ENCODE measurements at regions of chr19 and their contacts with region 1.

Region 1: DNA sequence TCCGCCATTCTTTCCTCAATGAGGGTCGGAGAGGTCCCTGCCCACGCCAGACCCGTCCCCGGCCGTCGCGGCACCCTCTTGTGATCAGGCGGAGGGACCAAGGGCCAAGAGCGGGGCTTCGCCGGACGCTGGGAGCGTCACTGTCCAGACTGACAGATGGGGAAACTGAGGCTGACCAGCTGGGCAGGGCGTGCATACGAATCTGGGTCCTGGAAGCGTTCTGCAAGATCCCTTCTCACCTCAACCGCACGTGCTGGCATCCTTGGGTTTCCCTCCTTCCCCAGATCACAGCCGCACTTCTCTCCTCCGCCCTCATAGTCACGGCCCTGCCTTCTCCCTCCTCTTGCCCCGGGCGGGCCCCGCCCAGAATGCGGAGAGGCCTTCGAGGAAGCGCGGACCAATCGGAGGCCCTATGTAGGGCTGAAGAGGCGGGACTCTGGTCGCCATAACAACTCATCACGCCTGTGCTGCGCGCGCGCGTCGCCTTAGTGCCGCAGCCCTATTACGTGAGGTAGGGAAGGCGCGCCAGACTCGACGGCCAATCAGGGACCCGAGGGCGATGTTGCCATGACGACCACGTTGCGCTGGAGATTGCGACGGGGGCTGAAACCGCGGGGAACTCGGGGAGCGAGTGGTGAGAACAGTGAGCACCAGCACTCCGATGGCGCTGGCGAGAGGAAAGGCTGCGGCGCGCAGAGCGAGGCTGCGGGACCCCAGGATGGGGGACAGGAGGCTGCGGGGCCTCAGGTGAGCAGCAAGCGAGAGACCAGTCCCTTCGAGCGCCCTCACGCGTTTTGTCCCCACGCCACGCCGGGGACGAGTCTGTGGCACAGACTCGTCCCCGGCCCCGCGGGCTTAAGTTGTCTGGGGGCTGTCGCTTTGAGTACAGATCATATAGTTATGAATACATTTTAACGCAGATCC is 5.7 kb downstream of the RNF225 start:
- DNase-seq: peak; percentile 99
- H3K4me3 Mint-ChIP-seq: peak overlapping the region; percentile 86
- H3K27ac Mint-ChIP-seq: peak overlapping the region; percentile 88
- H3K4me1 Mint-ChIP-seq: peaks cover 24% of the 10 kb centered on the region
- H3K27me3 Mint-ChIP-seq: peaks cover 5% of the 10 kb centered on the region

Region 2: GRCh38 chr19:57819475-57820148 is 581.6 kb before region 1 on chr19:
- intact Hi-C with region 1: loop called (anchors 1 kb)
- DNase-seq: peak; percentile 76
- H3K4me3 Mint-ChIP-seq: peak overlapping the region; percentile 99
- H3K27ac Mint-ChIP-seq: peak overlapping the region; percentile 98
- H3K4me1 Mint-ChIP-seq: peaks cover 50% of the 10 kb centered on the region
- H3K27me3 Mint-ChIP-seq: no peaks in the 10 kb centered on the region

Region 3: GRCh38 chr19:58212336-58213074 is 188.7 kb before region 1 on chr19:
- intact Hi-C with region 1: no loop called
- DNase-seq: no peak
- H3K4me3 Mint-ChIP-seq: no peak overlapping the region
- H3K27ac Mint-ChIP-seq: no peak overlapping the region
- H3K4me1 Mint-ChIP-seq: no peaks in the 10 kb centered on the region
- H3K27me3 Mint-ChIP-seq: no peaks in the 10 kb centered on the region

Region 4: DNA sequence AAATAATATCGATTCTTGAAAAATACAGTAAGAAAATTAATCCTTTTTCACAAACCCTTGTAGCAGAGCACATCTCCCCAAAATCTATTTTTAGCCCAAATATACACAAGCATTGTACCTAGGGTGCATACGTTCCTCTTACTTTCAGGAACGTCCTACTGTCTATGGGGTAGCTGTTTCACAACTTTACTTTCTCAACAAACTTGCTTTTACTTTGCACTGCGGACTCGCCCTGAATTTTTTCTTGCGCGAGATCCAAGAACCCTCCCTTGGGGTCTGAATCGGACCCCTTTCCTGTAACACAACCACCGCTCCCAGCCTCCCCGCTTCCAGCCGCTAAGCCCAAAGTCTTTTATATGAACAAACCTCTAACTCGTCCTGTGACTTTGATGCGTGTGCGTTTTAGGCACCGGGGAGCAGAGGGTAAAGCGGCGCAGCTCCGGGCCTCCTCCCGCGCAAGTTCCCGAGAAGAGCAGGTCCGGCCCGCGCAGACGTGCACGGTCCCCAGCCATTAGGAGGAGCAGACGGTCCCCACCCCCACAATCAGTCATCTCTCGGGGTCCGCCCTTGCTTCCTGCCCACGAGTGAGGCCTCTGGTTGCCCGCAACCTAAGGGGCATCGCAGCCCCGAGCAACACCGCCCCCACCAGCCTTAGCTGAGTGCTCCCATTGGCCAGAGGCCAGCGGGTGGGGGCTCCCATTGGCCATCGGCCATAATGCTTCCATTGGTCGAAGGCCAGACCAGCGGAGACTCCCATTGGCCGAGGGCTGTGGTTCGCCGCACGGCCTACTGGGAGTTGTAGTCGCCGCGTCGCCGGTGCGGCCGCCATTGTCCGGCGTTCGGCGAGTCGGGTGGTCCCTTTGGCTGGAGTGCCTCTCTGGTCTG is 122.8 kb before region 1 on chr19 and contains the start of gene ZNF8:
- intact Hi-C with region 1: loop called (anchors 1 kb)
- DNase-seq: peak; percentile 97
- H3K4me3 Mint-ChIP-seq: peak within 1 kb of the TSS; percentile 92
- H3K27ac Mint-ChIP-seq: peak within 1 kb of the TSS; percentile 93
- H3K4me1 Mint-ChIP-seq: peaks cover 23% of the 10 kb centered on the region
- H3K27me3 Mint-ChIP-seq: no peaks in the 10 kb centered on the region
- total RNA-seq, gene ZNF8: 4.0 and 4.4 TPM in 2 replicates

Region 5: GRCh38 chr19:58362272-58362994 is 38.7 kb before region 1 on chr19 and contains the start of gene ZNF497:
- intact Hi-C with region 1: loop called (anchors 1 kb)
- DNase-seq: peak; percentile 95
- H3K4me3 Mint-ChIP-seq: peak within 1 kb of the TSS; percentile 94
- H3K27ac Mint-ChIP-seq: peak within 1 kb of the TSS; percentile 95
- H3K4me1 Mint-ChIP-seq: peaks cover 7% of the 10 kb centered on the region
- H3K27me3 Mint-ChIP-seq: no peaks in the 10 kb centered on the region
- total RNA-seq, gene ZNF497: 0.76 and 0.93 TPM in 2 replicates

Region 6: GRCh38 chr19:58439576-58440554 is 38.7 kb after region 1 on chr19 and contains the start of gene ZNF132:
- intact Hi-C with region 1: loop called (anchors 1 kb)
- DNase-seq: peak; percentile 94
- H3K4me3 Mint-ChIP-seq: peak within 1 kb of the TSS; percentile 97
- H3K27ac Mint-ChIP-seq: peak within 1 kb of the TSS; percentile 98
- H3K4me1 Mint-ChIP-seq: peaks cover 24% of the 10 kb centered on the region
- H3K27me3 Mint-ChIP-seq: no peaks in the 10 kb centered on the region
- total RNA-seq, gene ZNF132: 3.4 and 3.5 TPM in 2 replicates

Region 7: DNA sequence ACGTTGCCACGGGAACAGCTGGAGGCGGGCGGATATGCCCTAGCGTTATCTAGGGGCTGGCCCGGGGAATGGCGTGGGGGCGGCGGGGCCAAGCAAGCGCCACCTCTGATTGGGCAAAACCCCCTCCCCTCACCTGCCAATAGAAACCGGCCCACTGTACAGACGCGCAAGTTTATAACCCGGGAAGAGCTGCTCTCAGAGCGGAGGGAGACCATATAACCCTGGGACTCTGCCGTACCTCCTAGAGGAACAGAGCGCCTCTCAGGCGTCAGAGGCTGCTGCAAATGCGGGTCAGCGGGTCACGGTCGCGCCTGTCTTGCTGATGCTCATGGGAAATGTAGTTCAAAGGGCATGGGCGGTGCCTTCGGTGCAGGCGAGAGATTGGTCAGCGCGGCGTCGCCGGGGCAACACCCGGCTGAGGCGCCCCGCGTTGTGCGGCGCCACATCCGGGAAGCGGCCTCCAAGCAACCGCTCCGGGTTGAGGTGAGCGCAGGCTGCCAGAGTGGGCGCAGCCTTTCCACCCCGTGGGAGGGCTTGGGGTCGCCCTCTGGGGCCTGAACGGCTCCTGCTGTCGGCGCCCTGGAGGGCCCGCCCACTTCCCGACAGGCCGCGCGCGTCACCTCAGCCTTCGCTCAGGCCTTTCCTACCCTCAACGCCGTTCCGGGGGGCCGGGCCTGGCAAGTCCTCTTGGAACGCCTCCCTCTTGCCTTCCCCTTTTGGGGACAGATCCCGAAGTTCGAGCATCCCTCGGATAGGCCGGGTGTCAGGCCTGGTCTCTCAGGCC is 74.7 kb after region 1 on chr19 and contains the start of gene ZNF446:
- intact Hi-C with region 1: loop called (anchors 1 kb)
- DNase-seq: peak; percentile 95
- H3K4me3 Mint-ChIP-seq: peak within 1 kb of the TSS; percentile 88
- H3K27ac Mint-ChIP-seq: peak within 1 kb of the TSS; percentile 99
- H3K4me1 Mint-ChIP-seq: peaks cover 25% of the 10 kb centered on the region
- H3K27me3 Mint-ChIP-seq: no peaks in the 10 kb centered on the region
- total RNA-seq, gene ZNF446: 6.6 and 6.7 TPM in 2 replicates

Region 8: GRCh38 chr19:58513694-58514563 is 112.8 kb after region 1 on chr19:
- intact Hi-C with region 1: loop called (anchors 1 kb)
- DNase-seq: peak; percentile 96
- H3K4me3 Mint-ChIP-seq: peak overlapping the region; percentile 91
- H3K27ac Mint-ChIP-seq: peak overlapping the region; percentile 96
- H3K4me1 Mint-ChIP-seq: peaks cover 20% of the 10 kb centered on the region
- H3K27me3 Mint-ChIP-seq: peaks cover 3% of the 10 kb centered on the region

Measured in activated T-helper 1 cell treated with anti-CD3 and anti-CD28 coated beads, Interleukin-12 subunit alpha, Interleukin-12 subunit beta, Interleukin-2, Interleukin-4 antibody, amounts not matched to agents 30 ng/mL and 10 ng/mL and 1 ng/mL, durations not matched to agents 14 hours and 24 hours and 36 hours (primary cell).